Endothelial cell of umbilical vein (primary cell): ENCODE measurements at regions of chr12 and their contacts with region 1.

Region 1: GRCh38 chr12:118372541-118373495 is at the start of gene TAOK3:
- DNase-seq: peak; percentile 98
- H3K4me3 ChIP-seq: peak within 1 kb of the TSS; percentile 78 to 95 (median 79)
- H3K27ac ChIP-seq: peak within 1 kb of the TSS; percentile 17
- H3K4me1 ChIP-seq: peaks cover 18% of the 10 kb centered on the region
- H3K27me3 ChIP-seq: no peaks in the 10 kb centered on the region
- CTCF ChIP-seq: no peak
- POLR2A ChIP-seq: peak; percentile 97
- total RNA-seq, gene TAOK3: 23.1 and 28.9 TPM in 2 replicates

Region 2: GRCh38 chr12:118016424-118017264 is 356.2 kb before region 1 on chr12 and contains the start of gene RFC5:
- CTCF ChIA-PET with region 1: no interaction called
- POLR2A ChIA-PET with region 1: no interaction called
- dilution Hi-C with region 1: no loop called
- intact Hi-C with region 1: loop called (anchors 5 kb)
- DNase-seq: peak; percentile 98
- H3K4me3 ChIP-seq: peak within 1 kb of the TSS; percentile 67 to 94 (median 81)
- H3K27ac ChIP-seq: peak within 1 kb of the TSS; percentile 32
- H3K4me1 ChIP-seq: peaks cover 9% of the 10 kb centered on the region
- H3K27me3 ChIP-seq: peaks cover 2 to 4% of the 10 kb centered on the region in 2 experiments
- CTCF ChIP-seq: no peak
- POLR2A ChIP-seq: peak; percentile 36
- total RNA-seq, gene RFC5: 23.3 and 24.8 TPM in 2 replicates

Region 3: DNA sequence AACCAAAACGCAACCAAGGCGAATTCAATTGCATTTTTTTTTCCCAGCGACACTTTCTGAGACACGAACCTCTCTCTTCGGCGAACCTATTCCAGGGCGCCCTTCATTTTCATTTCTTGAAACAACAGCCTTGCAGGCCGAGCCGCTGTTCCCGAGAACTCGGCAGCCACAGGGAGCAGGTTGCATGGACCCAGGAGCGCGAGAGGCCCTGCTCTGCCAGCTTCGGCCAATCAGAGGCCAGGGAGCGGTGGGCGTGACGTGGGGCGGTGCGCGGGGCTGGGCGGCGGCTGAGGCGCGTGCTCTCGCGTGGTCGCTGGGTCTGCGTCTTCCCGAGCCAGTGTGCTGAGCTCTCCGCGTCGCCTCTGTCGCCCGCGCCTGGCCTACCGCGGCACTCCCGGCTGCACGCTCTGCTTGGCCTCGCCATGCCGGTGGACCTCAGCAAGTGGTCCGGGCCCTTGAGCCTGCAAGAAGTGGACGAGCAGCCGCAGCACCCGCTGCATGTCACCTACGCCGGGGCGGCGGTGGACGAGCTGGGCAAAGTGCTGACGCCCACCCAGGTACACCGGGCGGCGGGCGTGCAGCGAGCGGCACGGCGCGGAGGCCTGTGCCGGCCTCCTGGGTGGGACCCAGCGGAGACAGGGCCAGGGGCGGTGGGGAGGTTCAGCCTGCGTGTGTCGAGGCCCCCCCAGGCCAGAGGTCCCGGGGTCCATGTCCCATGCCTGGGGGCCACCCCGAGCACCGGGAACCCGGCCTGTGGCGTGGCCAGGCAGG is 236.8 kb before region 1 on chr12 and contains the start of gene PEBP1:
- CTCF ChIA-PET with region 1: interaction called, 17 read pairs
- POLR2A ChIA-PET with region 1: no interaction called
- dilution Hi-C with region 1: no loop called
- intact Hi-C with region 1: no loop called
- DNase-seq: peak; percentile 94
- H3K4me3 ChIP-seq: peak within 1 kb of the TSS; percentile 48 to 82 (median 75)
- H3K27ac ChIP-seq: peak within 1 kb of the TSS; percentile 49
- H3K4me1 ChIP-seq: peaks cover 4% of the 10 kb centered on the region
- H3K27me3 ChIP-seq: no peaks in the 10 kb centered on the region
- CTCF ChIP-seq: no peak
- POLR2A ChIP-seq: peak; percentile 91
- total RNA-seq, gene PEBP1: 146 and 185 TPM in 2 replicates

Region 4: DNA sequence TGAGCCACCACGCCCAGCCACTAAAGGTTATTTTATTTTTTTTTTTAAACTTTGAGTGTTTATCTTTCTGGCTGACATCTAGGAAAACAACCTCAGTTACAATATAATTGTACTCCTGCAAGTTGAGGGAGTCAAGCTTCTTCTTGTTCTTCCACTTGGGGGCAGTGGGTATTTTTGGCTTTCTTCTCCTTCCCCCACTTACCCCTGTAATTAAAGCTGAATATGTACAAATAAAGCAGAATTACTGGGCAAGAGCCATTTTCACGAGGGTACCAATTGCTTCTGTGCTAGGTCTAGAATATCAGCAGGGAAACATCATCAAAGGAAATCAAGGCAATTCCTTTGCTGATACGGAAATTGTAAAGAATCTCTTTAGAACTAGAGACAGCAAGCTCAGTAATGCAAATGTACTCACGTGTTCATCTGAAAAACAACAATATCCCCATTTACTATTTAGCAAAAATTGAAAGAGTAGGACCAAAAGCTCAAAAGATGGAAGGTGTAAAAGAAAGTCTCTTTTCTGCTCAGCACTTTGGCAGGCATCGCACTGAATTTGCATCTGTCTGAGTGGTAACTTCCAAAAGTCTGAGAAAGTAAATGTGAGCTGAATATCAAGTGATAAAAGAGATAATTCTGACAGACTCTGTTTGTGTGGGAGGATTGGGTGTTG is 72.9 kb before region 1 on chr12:
- CTCF ChIA-PET with region 1: interaction called, 17 read pairs
- POLR2A ChIA-PET with region 1: no interaction called
- dilution Hi-C with region 1: no loop called
- intact Hi-C with region 1: no loop called
- DNase-seq: no peak
- H3K4me3 ChIP-seq: no peak overlapping the region
- H3K27ac ChIP-seq: no peak overlapping the region
- H3K4me1 ChIP-seq: peaks cover 6% of the 10 kb centered on the region
- H3K27me3 ChIP-seq: no peaks in the 10 kb centered on the region
- CTCF ChIP-seq: no peak
- POLR2A ChIP-seq: no peak

Region 5: GRCh38 chr12:118357257-118358007 is 15.4 kb before region 1 on chr12:
- CTCF ChIA-PET with region 1: interaction called, 37 read pairs
- POLR2A ChIA-PET with region 1: interaction called, 4 read pairs
- dilution Hi-C with region 1: no loop called
- intact Hi-C with region 1: loop called (anchors 1 kb)
- DNase-seq: peak; percentile 70
- H3K4me3 ChIP-seq: peak overlapping the region in 1 of 3 experiments; percentile 72
- H3K27ac ChIP-seq: peak overlapping the region; percentile 50
- H3K4me1 ChIP-seq: peaks cover 48% of the 10 kb centered on the region
- H3K27me3 ChIP-seq: no peaks in the 10 kb centered on the region
- CTCF ChIP-seq: no peak
- POLR2A ChIP-seq: no peak